ENCODE measurements at regions of chr16 and their contacts with region 1.

Region 1: DNA sequence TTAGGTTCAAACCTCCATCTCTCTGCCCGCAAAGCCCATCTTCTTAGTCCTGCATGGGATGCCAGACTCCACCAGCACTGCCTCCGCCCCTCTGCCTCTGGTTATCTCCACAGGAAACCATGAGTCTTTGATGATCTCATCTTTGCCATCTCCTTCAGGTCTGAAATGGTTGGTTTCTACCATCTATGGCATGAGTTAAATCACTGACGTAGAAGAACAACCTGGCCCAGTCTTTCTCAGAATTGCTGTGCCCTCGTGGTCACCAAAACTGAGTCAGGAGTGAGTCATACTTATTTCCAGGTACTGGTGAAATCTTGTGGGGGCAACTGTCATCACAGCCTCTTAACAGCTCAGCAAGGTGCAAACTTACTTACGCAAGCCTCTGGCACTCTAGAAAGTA is 468.7 kb upstream of the C16orf82 start:
- DNase-seq: peak; percentile 82
- H3K4me3 Mint-ChIP-seq: peak overlapping the region; percentile 51
- H3K27ac Mint-ChIP-seq: peak overlapping the region; percentile 94
- H3K4me1 Mint-ChIP-seq: peaks cover 76% of the 10 kb centered on the region
- H3K27me3 Mint-ChIP-seq: no peaks in the 10 kb centered on the region

Region 2: DNA sequence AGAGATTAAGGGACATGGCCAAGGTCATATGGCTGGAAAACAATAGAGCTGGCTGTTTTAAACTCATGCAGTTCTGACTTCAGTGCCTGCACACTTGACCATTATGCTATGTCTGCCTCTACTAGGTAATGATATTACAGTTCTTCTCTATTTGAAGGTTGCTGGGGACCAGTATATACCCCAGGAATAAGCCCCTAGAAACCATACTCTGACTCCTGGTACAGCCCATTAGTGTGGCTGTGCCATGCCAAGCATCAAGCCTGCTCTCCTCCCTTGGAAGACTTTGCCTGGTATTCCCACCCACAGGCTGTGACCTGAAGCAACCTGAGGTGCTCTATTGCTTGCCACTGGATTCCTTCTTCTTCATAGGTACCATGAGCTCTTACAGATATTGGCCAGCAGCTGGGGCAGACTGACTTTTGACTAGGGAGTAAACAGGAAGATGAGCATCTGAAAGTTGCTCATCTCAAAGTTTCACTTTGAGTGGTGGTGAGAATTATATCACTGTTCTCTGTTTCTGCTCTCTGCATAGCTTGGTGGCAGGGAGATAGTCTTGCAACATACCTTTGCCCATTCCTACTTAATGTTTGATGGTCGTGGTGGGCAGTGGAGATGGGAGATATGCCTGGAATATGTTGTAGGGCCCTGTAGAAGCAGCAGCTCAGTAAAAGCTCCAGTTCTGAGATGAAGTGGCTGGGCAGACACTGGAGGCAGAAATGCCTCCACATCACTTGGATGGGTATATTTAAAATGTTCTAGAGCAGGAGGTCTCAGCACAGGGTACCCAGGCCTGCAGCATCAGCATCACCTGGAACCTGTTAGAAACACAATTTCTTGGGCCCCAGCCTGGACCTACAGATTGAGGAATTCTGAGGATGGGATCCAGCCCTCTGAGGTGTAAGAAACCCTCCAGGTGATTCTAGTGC is 631.6 kb before region 1 on chr16:
- intact Hi-C with region 1: loop called (anchors 2 kb)
- DNase-seq: no peak
- H3K4me3 Mint-ChIP-seq: no peak overlapping the region
- H3K27ac Mint-ChIP-seq: peak overlapping the region; percentile 63
- H3K4me1 Mint-ChIP-seq: peaks cover 29% of the 10 kb centered on the region
- H3K27me3 Mint-ChIP-seq: no peaks in the 10 kb centered on the region

Region 3: DNA sequence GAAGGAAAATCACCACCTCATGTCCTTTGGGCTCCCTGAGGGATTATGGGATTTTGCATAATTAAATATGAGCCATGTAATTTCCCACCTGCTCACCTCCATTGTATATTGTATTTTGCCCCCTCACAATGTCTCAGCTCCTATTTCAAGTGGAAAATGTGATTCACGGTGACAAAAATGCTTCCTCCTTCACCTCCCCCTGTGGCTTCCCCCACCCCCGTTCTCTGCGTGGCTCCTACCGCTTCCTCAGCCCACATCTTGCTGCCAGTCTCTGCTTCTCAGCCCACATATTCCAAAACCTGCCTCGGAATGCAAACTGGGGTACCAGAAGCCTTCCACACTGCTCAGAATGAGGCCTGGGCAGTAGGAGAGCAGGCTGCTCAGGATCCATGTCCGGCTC is 74.1 kb after region 1 on chr16:
- intact Hi-C with region 1: loop called (anchors 1 kb)
- DNase-seq: no peak
- H3K4me3 Mint-ChIP-seq: no peak overlapping the region
- H3K27ac Mint-ChIP-seq: peak overlapping the region; percentile 67
- H3K4me1 Mint-ChIP-seq: peaks cover 32% of the 10 kb centered on the region
- H3K27me3 Mint-ChIP-seq: no peaks in the 10 kb centered on the region

Region 4: DNA sequence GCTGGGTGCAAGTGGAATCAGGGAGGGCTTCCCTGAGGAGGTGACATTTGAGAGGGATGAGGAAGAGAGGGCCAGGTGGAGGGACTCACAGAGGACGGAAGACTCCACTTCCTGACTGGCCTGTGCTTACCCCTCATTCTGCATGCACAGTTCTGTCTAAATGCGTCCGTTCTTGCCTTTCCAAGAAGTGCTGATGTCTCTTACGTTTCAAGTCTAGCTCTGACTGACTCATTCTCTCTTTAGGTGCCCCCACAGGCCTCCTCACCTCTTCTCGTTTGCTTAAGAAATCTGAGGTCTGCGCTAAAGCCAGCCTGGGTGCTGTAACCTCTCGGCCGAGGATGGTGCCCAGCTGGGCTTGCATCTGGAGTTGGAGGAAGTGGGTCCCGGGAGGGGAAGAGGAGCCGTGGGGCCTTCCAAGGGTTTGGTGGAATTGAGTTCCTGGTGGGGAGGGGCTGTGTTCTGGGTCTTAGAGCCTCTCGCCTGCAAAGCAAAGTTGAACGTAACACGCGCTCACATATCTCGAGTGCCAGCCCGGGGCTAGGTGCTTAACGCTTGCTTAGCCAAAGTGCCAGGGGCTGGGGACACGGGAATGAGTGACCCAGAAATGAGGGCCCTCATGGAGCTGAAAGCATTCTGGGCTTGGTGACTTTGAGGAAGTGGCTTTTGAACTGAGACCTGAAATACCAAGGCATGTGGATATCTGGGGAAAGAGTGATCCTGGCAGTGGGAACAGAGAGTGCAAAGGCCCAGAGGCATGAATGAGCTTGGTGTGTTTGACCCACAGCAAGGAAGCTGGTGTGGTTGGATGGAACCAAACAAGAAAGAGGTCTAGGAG is 720.5 kb after region 1 on chr16:
- intact Hi-C with region 1: loop called (anchors 1 kb)
- DNase-seq: peak; percentile 54
- H3K4me3 Mint-ChIP-seq: peak overlapping the region; percentile 100
- H3K27ac Mint-ChIP-seq: peak overlapping the region; percentile 98
- H3K4me1 Mint-ChIP-seq: peaks cover 60% of the 10 kb centered on the region
- H3K27me3 Mint-ChIP-seq: no peaks in the 10 kb centered on the region

Region 5: GRCh38 chr16:27401768-27402568 is 803.9 kb after region 1 on chr16 and contains the start of gene IL21R:
- intact Hi-C with region 1: loop called (anchors 1 kb)
- DNase-seq: peak; percentile 78
- H3K4me3 Mint-ChIP-seq: peak within 1 kb of the TSS; percentile 99
- H3K27ac Mint-ChIP-seq: peak within 1 kb of the TSS; percentile 99
- H3K4me1 Mint-ChIP-seq: peaks cover 45% of the 10 kb centered on the region
- H3K27me3 Mint-ChIP-seq: no peaks in the 10 kb centered on the region
- total RNA-seq, gene IL21R: 84.2 and 84.5 TPM in 2 replicates

Measured in activated T-helper 2 cell treated with anti-CD3 and anti-CD28 coated beads, Interferon-gamma antibody, Interleukin-2, Interleukin-4, amounts not matched to agents 10 μg/mL and 5 μg/mL and 100 μg/mL, durations not matched to agents 14 hours and 24 hours and 36 hours (primary cell).